ENCODE measurements at regions of chr1 and their contacts with region 1.

Region 1: GRCh38 chr1:236774926-236775325 is 20.2 kb upstream of the MTR start:
- DNase-seq: peak; percentile 26
- ATAC-seq: peak; percentile 43; the same call in 1 of the 2 replicates
- H3K4me3 ChIP-seq: no peak overlapping the region
- H3K27ac ChIP-seq: no peak overlapping the region
- H3K4me1 ChIP-seq: no peaks in the 10 kb centered on the region
- H3K27me3 ChIP-seq: peaks cover 16% of the 10 kb centered on the region
- CTCF ChIP-seq: peak; percentile 44; the same call in 1 of the 2 replicates

Region 2: DNA sequence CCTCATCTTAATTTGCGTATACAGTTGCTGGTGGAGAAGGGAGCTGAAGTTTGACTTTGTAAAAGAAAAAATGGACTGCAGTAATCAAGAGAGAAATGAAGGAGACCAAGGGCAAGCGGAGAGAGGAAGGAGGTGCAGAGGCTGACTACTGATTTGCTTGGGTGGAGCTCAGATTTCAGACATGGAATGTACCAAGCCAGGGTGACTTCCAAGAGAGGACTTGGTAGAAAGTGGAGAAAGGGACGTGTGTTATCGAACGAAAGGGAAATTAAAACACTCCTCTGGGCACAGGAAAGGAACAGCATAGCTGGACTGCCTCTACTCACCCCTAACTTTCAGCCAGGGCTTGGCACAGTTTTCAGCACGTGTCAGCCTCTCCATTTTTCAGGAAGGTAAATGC is 155.5 kb before region 1 on chr1:
- CTCF ChIA-PET with region 1: no interaction called
- POLR2A ChIA-PET with region 1: no interaction called
- intact Hi-C with region 1: loop called (anchors 10 kb)
- DNase-seq: no peak
- ATAC-seq: no peak
- H3K4me3 ChIP-seq: no peak overlapping the region
- H3K27ac ChIP-seq: no peak overlapping the region
- H3K4me1 ChIP-seq: no peaks in the 10 kb centered on the region
- H3K27me3 ChIP-seq: peaks cover 26% of the 10 kb centered on the region
- CTCF ChIP-seq: no peak

Region 3: GRCh38 chr1:236663934-236664333 is 111.0 kb before region 1 on chr1:
- CTCF ChIA-PET with region 1: no interaction called
- POLR2A ChIA-PET with region 1: no interaction called
- intact Hi-C with region 1: no loop called
- DNase-seq: no peak
- ATAC-seq: no peak
- H3K4me3 ChIP-seq: no peak overlapping the region
- H3K27ac ChIP-seq: no peak overlapping the region
- H3K4me1 ChIP-seq: no peaks in the 10 kb centered on the region
- H3K27me3 ChIP-seq: peaks cover 46% of the 10 kb centered on the region
- CTCF ChIP-seq: no peak

Region 4: GRCh38 chr1:236741753-236742152 is 33.2 kb before region 1 on chr1:
- CTCF ChIA-PET with region 1: no interaction called
- POLR2A ChIA-PET with region 1: no interaction called
- intact Hi-C with region 1: no loop called
- DNase-seq: no peak
- ATAC-seq: no peak
- H3K4me3 ChIP-seq: no peak overlapping the region
- H3K27ac ChIP-seq: no peak overlapping the region
- H3K4me1 ChIP-seq: no peaks in the 10 kb centered on the region
- H3K27me3 ChIP-seq: peaks cover 15% of the 10 kb centered on the region
- CTCF ChIP-seq: no peak

Region 5: GRCh38 chr1:236830560-236830959 is 55.6 kb after region 1 on chr1:
- CTCF ChIA-PET with region 1: no interaction called
- POLR2A ChIA-PET with region 1: no interaction called
- intact Hi-C with region 1: no loop called
- DNase-seq: no peak
- ATAC-seq: no peak
- H3K4me3 ChIP-seq: no peak overlapping the region
- H3K27ac ChIP-seq: no peak overlapping the region
- H3K4me1 ChIP-seq: no peaks in the 10 kb centered on the region
- H3K27me3 ChIP-seq: no peaks in the 10 kb centered on the region
- CTCF ChIP-seq: no peak

Region 6: GRCh38 chr1:237115035-237115434 is 340.1 kb after region 1 on chr1:
- CTCF ChIA-PET with region 1: no interaction called
- POLR2A ChIA-PET with region 1: no interaction called
- intact Hi-C with region 1: no loop called
- DNase-seq: no peak
- ATAC-seq: no peak
- H3K4me3 ChIP-seq: no peak overlapping the region
- H3K27ac ChIP-seq: no peak overlapping the region
- H3K4me1 ChIP-seq: no peaks in the 10 kb centered on the region
- H3K27me3 ChIP-seq: no peaks in the 10 kb centered on the region
- CTCF ChIP-seq: no peak